ENCODE measurements at regions of chrX and their contacts with region 1.

Region 1: GRCh38 chrX:9656277-9656676 is 109.4 kb downstream of the GPR143 start:
- DNase-seq: no peak
- ATAC-seq: peak; percentile 86
- H3K4me3 Mint-ChIP-seq: no peak overlapping the region
- H3K27ac Mint-ChIP-seq: peak overlapping the region; percentile 76
- H3K4me1 Mint-ChIP-seq: peaks cover 21% of the 10 kb centered on the region
- H3K27me3 Mint-ChIP-seq: no peaks in the 10 kb centered on the region
- CTCF ChIP-seq: no peak

Region 2: GRCh38 chrX:9644335-9644734 is 11.9 kb before region 1 on chrX:
- CTCF ChIA-PET with region 1: no interaction called
- POLR2A ChIA-PET with region 1: no interaction called
- intact Hi-C with region 1: loop called (anchors 1 kb)
- DNase-seq: peak; percentile 16
- ATAC-seq: peak; percentile 94
- H3K4me3 Mint-ChIP-seq: peak overlapping the region; percentile 38
- H3K27ac Mint-ChIP-seq: peak overlapping the region; percentile 60
- H3K4me1 Mint-ChIP-seq: peaks cover 28% of the 10 kb centered on the region
- H3K27me3 Mint-ChIP-seq: no peaks in the 10 kb centered on the region
- CTCF ChIP-seq: no peak

Region 3: GRCh38 chrX:9671998-9672397 is 15.7 kb after region 1 on chrX:
- CTCF ChIA-PET with region 1: no interaction called
- POLR2A ChIA-PET with region 1: interaction called, 7 read pairs
- intact Hi-C with region 1: loop called (anchors 1 kb)
- DNase-seq: no peak
- ATAC-seq: peak; percentile 80
- H3K4me3 Mint-ChIP-seq: peak overlapping the region; percentile 64
- H3K27ac Mint-ChIP-seq: peak overlapping the region; percentile 84
- H3K4me1 Mint-ChIP-seq: peaks cover 44% of the 10 kb centered on the region
- H3K27me3 Mint-ChIP-seq: no peaks in the 10 kb centered on the region
- CTCF ChIP-seq: no peak

Region 4: GRCh38 chrX:9770319-9770718 is 114.0 kb after region 1 on chrX:
- CTCF ChIA-PET with region 1: no interaction called
- POLR2A ChIA-PET with region 1: no interaction called
- intact Hi-C with region 1: no loop called
- DNase-seq: no peak
- ATAC-seq: no peak
- H3K4me3 Mint-ChIP-seq: no peak overlapping the region
- H3K27ac Mint-ChIP-seq: no peak overlapping the region
- H3K4me1 Mint-ChIP-seq: no peaks in the 10 kb centered on the region
- H3K27me3 Mint-ChIP-seq: peaks cover 6% of the 10 kb centered on the region
- CTCF ChIP-seq: no peak

Region 5: GRCh38 chrX:9885150-9885549 is 228.9 kb after region 1 on chrX:
- CTCF ChIA-PET with region 1: no interaction called
- POLR2A ChIA-PET with region 1: no interaction called
- intact Hi-C with region 1: no loop called
- DNase-seq: peak; percentile 35
- ATAC-seq: peak; percentile 85
- H3K4me3 Mint-ChIP-seq: no peak overlapping the region
- H3K27ac Mint-ChIP-seq: no peak overlapping the region
- H3K4me1 Mint-ChIP-seq: peaks cover 2% of the 10 kb centered on the region
- H3K27me3 Mint-ChIP-seq: peaks cover 3% of the 10 kb centered on the region
- CTCF ChIP-seq: no peak

Measured in activated B cell treated with CpG ODN at 0.5 μM for 24 hours (primary cell).